ENCODE measurements at regions of chr1 and their contacts with region 1.

Region 1: DNA sequence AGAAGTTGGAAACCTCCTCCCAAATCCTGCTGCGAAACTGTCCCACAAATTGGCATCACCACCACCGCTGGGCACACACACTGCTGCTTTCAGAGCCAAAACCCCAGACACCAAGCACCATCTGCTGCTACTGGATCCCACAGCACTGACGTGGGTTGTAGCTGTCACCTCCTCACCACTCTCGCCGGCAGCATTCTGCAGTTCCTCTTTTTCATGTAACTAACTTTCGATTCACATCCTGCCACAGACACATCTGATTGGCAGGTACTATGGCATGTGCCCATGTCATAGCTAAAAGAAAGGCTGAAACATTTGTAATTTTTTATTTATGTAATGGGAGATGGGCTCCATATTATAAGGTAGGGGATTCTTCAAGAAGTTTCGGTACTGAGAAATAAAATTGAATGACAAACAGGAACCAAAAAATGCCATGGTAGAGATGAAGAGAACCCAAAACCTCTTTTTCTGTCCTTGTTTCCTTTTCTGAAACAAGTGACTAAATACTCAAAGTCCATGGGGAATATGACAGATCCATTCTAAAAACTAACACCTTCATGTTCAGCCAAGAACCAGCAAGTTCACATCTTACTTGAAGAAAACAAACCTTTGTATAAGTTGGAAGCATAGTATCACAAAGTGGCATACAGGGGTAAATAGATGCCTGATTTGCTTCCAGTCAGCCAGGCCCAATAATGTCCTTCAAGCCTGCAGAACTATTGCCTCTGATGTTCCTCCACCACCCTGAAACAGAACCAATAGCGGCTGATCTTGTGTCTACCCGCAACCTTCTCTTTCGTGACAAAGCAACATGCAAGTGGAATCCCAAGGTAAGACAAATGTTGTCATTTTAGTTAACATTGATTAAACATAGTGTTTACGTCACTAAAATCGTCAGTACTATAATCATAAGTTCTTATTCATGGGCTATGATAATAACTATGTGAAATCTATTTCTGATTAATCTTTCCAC is 26.6 kb upstream of the RGS13 start:
- DNase-seq: no peak
- H3K4me3 ChIP-seq: no peak overlapping the region
- H3K27ac ChIP-seq: no peak overlapping the region
- H3K4me1 ChIP-seq: no peaks in the 10 kb centered on the region
- H3K27me3 ChIP-seq: peaks cover 3% of the 10 kb centered on the region
- CTCF ChIP-seq: no peak

Region 2: GRCh38 chr1:192053531-192053971 is 555.8 kb before region 1 on chr1:
- CTCF ChIA-PET with region 1: no interaction called
- dilution Hi-C with region 1: no loop called
- in situ Hi-C with region 1: no loop called
- intact Hi-C with region 1: no loop called
- DNase-seq: no peak
- H3K4me3 ChIP-seq: no peak overlapping the region
- H3K27ac ChIP-seq: no peak overlapping the region
- H3K4me1 ChIP-seq: no peaks in the 10 kb centered on the region
- H3K27me3 ChIP-seq: peaks cover 3% of the 10 kb centered on the region
- CTCF ChIP-seq: no peak

Region 3: DNA sequence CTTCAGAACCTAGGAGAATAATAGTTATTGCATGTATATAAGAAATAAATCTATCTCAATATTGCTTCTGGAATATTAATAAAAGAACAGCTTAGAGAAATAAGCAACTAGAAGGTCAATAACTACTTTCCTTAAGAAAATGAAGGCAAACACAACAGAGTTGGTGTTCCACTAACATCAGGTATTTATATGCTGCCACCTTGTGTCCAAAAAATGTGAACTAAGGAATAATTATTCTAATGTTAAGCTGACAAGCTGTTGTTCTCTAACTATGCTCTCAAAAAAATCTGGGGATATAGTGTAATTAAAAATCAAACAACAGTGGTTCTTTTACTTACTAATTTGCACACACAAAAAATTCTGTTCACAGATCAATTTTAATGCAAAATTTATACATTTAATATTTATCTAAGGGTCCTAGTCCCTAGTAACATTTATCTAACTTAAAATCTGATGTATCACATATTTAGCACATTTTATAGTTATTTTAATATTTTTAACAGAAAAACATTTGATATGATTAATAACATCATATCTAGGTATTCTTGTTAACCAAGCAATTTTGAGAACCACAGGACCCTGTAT is 410.1 kb after region 1 on chr1:
- CTCF ChIA-PET with region 1: no interaction called
- dilution Hi-C with region 1: no loop called
- in situ Hi-C with region 1: no loop called
- intact Hi-C with region 1: loop called (anchors 10 kb)
- DNase-seq: peak; percentile 39
- H3K4me3 ChIP-seq: no peak overlapping the region
- H3K27ac ChIP-seq: no peak overlapping the region
- H3K4me1 ChIP-seq: no peaks in the 10 kb centered on the region
- H3K27me3 ChIP-seq: no peaks in the 10 kb centered on the region
- CTCF ChIP-seq: peak; percentile 33 to 53

Region 4: GRCh38 chr1:193031438-193031837 is 422.0 kb after region 1 on chr1:
- CTCF ChIA-PET with region 1: no interaction called
- dilution Hi-C with region 1: no loop called
- in situ Hi-C with region 1: loop called in 1 of 2 experiments (anchors 25 kb)
- intact Hi-C with region 1: loop called (anchors 10 kb)
- DNase-seq: no peak
- H3K4me3 ChIP-seq: no peak overlapping the region
- H3K27ac ChIP-seq: no peak overlapping the region
- H3K4me1 ChIP-seq: no peaks in the 10 kb centered on the region
- H3K27me3 ChIP-seq: no peaks in the 10 kb centered on the region
- CTCF ChIP-seq: peak; percentile 16 to 41

Measured in mammary epithelial cell (primary cell).